Endothelial cell of umbilical vein (primary cell): ENCODE measurements at regions of chr1 and their contacts with region 1.

Region 1: DNA sequence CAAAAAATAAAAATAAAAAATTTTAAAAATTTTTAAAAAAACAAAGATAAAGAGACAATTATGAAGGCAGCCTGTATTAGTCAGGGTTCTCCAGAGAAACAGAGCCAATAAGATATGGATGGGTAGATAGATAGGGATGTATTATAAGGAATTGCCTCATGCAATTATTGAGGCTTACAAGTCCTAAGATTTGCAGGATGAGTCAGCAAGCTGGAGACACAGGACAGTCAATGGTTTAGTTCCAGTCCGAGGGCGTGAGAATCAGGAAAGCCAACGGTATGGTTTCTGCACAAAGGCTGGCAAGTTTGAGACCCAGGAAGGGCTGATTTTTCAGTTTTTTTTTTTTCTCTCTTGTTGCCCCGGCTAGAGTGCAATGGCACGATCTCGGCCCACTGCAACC is 24.1 kb upstream of the EIF4G3 start:
- DNase-seq: no peak
- H3K4me3 ChIP-seq: no peak overlapping the region
- H3K27ac ChIP-seq: no peak overlapping the region
- H3K4me1 ChIP-seq: no peaks in the 10 kb centered on the region
- H3K27me3 ChIP-seq: peaks cover 0 to 4% of the 10 kb centered on the region in 2 experiments
- CTCF ChIP-seq: no peak
- POLR2A ChIP-seq: no peak

Region 2: GRCh38 chr1:20696397-20697329 is 504.1 kb before region 1 on chr1:
- CTCF ChIA-PET with region 1: interaction called, 150 read pairs
- POLR2A ChIA-PET with region 1: no interaction called
- dilution Hi-C with region 1: no loop called
- intact Hi-C with region 1: loop called (anchors 1 kb)
- DNase-seq: peak; percentile 86
- H3K4me3 ChIP-seq: peak overlapping the region; percentile 34 to 45 (median 38)
- H3K27ac ChIP-seq: peak overlapping the region; percentile 44
- H3K4me1 ChIP-seq: peaks cover 4% of the 10 kb centered on the region
- H3K27me3 ChIP-seq: no peaks in the 10 kb centered on the region
- CTCF ChIP-seq: peak; percentile 65 to 96
- POLR2A ChIP-seq: no peak

Region 3: GRCh38 chr1:20847611-20848080 is 353.1 kb before region 1 on chr1:
- CTCF ChIA-PET with region 1: interaction called, 11 read pairs
- POLR2A ChIA-PET with region 1: no interaction called
- dilution Hi-C with region 1: no loop called
- intact Hi-C with region 1: loop called (anchors 5 kb)
- DNase-seq: peak; percentile 63
- H3K4me3 ChIP-seq: no peak overlapping the region
- H3K27ac ChIP-seq: no peak overlapping the region
- H3K4me1 ChIP-seq: peaks cover 18% of the 10 kb centered on the region
- H3K27me3 ChIP-seq: no peaks in the 10 kb centered on the region
- CTCF ChIP-seq: no peak
- POLR2A ChIP-seq: no peak

Region 4: DNA sequence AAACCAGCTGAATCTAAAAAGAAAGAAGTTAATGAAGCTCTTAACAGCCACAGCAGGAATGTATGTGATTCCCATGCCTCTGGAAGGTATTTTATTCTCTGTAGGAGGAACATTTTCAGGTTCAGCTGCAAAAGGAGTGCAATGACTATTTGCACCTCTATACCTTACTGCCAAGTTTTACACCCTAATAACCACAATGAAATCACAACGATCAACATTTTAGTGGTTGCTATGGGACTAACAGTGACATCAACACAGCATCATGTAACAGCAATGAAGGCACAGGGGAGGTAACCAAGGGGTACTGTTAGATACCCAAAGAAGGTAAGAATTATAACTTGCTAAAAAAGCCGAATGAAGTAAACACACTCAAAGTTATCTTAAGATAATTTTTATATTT is 297.3 kb before region 1 on chr1:
- CTCF ChIA-PET with region 1: interaction called, 10 read pairs
- POLR2A ChIA-PET with region 1: no interaction called
- dilution Hi-C with region 1: no loop called
- intact Hi-C with region 1: no loop called
- DNase-seq: no peak
- H3K4me3 ChIP-seq: no peak overlapping the region
- H3K27ac ChIP-seq: no peak overlapping the region
- H3K4me1 ChIP-seq: no peaks in the 10 kb centered on the region
- H3K27me3 ChIP-seq: no peaks in the 10 kb centered on the region
- CTCF ChIP-seq: no peak
- POLR2A ChIP-seq: no peak

Region 5: GRCh38 chr1:20992322-20993056 is 208.3 kb before region 1 on chr1:
- CTCF ChIA-PET with region 1: interaction called, 14 read pairs
- POLR2A ChIA-PET with region 1: no interaction called
- dilution Hi-C with region 1: no loop called
- intact Hi-C with region 1: no loop called
- DNase-seq: no peak
- H3K4me3 ChIP-seq: no peak overlapping the region
- H3K27ac ChIP-seq: no peak overlapping the region
- H3K4me1 ChIP-seq: no peaks in the 10 kb centered on the region
- H3K27me3 ChIP-seq: no peaks in the 10 kb centered on the region
- CTCF ChIP-seq: no peak
- POLR2A ChIP-seq: no peak

Region 6: DNA sequence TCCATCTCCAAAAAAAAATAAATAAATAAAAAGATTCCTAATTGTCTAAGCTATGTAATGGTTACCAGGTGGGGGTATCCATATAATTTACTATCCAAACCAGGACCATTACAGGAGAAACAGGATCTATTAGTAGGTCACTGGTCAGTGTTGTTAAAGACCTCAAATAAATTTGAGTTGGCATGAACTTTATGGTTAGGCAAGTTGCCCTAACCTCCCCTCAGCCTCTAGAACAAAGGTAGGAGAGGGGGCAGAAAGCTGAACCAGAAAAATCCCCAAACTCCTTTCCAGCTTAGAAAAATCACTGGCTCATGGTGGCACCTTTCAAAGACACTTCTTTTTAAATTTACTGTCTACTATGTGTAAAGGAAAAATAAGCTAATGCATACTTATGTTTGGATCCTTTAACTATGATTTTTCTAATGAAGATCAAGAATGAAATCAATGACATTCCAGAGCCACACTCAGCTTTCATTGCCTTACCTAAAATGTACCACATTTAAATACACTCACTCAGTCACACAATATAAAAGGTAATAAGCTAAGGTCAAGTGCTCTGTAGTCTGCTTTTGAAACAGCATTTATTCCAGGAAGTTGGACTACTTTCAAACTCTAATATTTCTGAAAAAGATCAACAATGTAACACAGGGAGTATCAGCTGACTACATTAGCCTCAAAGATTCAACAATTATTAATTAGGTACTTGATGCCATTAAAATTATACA is 37.9 kb before region 1 on chr1:
- CTCF ChIA-PET with region 1: interaction called, 13 read pairs
- POLR2A ChIA-PET with region 1: no interaction called
- dilution Hi-C with region 1: no loop called
- intact Hi-C with region 1: no loop called
- DNase-seq: peak; percentile 55
- H3K4me3 ChIP-seq: no peak overlapping the region
- H3K27ac ChIP-seq: no peak overlapping the region
- H3K4me1 ChIP-seq: no peaks in the 10 kb centered on the region
- H3K27me3 ChIP-seq: no peaks in the 10 kb centered on the region
- CTCF ChIP-seq: no peak
- POLR2A ChIP-seq: no peak

Region 7: GRCh38 chr1:21184276-21184675 is 16.5 kb before region 1 on chr1:
- CTCF ChIA-PET with region 1: interaction called, 27 read pairs
- POLR2A ChIA-PET with region 1: no interaction called
- dilution Hi-C with region 1: no loop called
- intact Hi-C with region 1: no loop called
- DNase-seq: no peak
- H3K4me3 ChIP-seq: no peak overlapping the region
- H3K27ac ChIP-seq: no peak overlapping the region
- H3K4me1 ChIP-seq: no peaks in the 10 kb centered on the region
- H3K27me3 ChIP-seq: no peaks in the 10 kb centered on the region
- CTCF ChIP-seq: no peak
- POLR2A ChIP-seq: no peak

Region 8: DNA sequence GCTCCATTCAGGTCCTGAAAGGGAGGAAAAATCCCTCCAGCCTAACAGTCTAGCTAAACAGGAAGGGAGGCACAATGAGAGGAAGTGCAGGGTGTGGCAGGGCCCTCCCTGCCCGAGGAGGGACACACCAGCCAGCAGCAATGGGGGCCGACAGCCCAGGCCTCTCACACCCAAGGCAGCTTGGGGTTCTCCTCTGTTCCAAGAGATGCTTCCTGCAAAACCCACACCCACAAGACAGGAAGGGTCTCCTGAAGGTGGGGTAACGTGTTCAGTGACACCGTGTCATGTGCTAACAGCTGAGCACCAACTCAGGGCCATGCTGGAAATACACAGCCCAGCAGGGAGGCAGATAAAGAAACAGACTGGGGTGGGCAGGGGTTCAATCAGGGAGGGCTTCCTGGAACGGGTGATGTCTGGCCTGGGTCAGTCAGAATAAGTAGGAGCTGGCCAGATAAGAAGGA is 79.3 kb after region 1 on chr1:
- CTCF ChIA-PET with region 1: no interaction called
- POLR2A ChIA-PET with region 1: no interaction called
- dilution Hi-C with region 1: no loop called
- intact Hi-C with region 1: no loop called
- DNase-seq: peak; percentile 92
- H3K4me3 ChIP-seq: peak overlapping the region in 1 of 3 experiments; percentile 68
- H3K27ac ChIP-seq: peak overlapping the region; percentile 98
- H3K4me1 ChIP-seq: peaks cover 64% of the 10 kb centered on the region
- H3K27me3 ChIP-seq: no peaks in the 10 kb centered on the region
- CTCF ChIP-seq: no peak
- POLR2A ChIP-seq: peak; percentile 40